GM18951 (cell line): ENCODE measurements at regions of chr4 and their contacts with region 1.

Region 1: DNA sequence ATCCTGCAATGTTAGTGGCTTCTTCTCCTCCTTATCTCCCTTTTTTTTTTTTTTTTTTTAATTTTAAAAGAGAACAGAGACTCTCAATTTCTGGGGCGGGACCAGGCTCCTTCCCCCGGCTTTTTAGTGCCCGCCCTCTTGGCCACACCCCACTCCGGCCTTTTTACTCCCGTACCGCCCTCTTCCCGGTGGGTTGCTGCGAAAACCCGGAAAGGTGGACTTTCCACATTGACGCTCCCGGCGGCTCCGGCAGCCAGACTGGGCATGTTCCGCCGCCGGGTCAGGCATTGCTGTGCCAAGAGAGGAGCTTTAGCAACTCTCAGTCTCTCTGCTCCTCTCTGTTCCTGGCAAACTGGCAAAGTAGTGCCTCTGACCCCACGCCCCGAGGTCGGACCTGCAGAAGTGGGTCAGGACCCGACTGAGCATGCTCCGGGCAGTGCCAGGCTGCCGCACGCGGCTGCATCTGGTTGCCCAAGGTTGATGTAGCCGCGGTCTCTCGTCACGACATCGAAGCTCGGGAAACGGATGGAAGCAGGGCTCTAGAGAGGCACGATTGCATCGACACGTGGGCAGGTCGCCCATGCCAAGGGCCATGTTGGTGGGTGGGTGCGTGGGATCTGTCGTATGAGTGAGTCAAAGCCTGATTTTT is 1.1 kb upstream of the MFAP3L start:
- POLR2A ChIP-seq: no peak

Region 2: DNA sequence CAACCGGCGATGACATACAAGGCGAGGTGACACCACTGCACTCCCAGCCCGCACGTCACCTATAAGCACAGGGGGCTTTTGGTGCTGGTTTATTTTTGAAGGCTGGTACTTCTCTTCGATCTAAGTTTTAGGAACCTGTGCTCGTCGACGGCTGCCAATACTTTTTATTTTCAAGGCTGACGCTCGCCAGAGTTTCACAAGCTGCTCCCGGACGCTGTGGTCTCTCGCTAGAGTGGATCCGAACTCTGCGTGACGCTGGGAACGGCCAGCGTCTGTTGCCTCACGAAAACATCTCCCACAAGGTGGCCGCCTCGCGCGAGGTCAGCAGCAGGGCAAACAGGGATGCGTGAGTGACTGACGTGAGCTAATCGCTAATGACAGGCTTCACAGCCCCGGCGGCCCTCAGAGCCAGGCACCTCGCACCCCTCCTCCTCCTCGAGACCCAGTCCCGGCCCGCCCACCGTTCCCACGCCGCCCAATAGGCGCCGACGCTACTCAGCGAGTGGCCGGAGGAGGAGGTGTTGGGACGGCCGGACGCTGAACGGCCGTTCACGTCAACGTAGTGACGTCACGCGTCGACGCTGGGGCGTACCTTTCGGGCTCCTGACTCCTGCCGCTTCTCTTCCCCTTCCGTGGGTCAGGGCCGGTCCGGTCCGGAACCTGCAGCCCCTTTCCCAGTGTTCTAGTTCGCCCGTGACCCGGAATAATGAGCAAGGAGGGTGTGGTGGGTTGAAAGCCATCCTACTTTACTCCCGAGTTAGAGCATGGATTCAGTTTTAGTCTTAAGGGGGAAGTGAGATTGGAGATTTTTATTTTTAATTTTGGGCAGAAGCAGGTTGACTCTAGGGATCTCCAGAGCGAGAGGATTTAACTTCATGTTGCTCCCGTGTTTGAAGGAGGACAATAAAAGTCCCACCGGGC is 407.1 kb before region 1 on chr4 and contains the start of gene CLCN3:
- in situ Hi-C with region 1: loop called (anchors 25 kb)
- POLR2A ChIP-seq: peak; percentile 96

Region 3: GRCh38 chr4:169810325-169811323 is 216.7 kb before region 1 on chr4:
- in situ Hi-C with region 1: loop called (anchors 25 kb)
- POLR2A ChIP-seq: no peak

Region 4: DNA sequence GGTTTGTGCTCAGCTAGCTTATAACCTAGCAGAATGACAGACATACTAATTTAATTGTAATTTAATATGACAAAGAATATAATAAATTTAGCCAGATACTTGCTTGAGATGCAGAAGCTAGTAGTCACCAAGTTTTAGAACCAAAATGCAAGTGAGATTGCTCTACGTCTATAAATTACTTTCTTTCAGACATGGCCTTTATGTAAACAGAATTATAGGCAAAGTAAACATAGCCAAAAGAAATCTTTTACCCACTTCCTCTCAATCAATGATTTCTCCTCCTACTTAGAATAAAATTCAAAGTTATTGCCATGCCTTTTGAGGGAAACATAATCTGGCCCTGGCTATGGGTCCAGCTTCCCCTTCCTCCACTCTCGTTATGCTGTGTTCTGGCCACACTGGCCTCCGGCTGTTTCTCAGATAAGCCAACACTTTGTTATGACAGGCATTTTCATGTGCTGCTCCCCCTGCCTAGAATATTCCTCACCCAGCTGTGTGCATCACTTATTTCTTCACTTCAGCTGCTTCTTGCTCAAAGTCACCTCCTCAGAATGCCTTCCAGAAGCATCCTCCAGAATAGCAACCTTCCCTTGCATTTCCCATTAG is 448.9 kb after region 1 on chr4:
- in situ Hi-C with region 1: no loop called
- POLR2A ChIP-seq: no peak